Heart right ventricle (tissue), 16 donors: ENCODE measurements at regions of chr2 and their contacts with region 1.

Region 1: DNA sequence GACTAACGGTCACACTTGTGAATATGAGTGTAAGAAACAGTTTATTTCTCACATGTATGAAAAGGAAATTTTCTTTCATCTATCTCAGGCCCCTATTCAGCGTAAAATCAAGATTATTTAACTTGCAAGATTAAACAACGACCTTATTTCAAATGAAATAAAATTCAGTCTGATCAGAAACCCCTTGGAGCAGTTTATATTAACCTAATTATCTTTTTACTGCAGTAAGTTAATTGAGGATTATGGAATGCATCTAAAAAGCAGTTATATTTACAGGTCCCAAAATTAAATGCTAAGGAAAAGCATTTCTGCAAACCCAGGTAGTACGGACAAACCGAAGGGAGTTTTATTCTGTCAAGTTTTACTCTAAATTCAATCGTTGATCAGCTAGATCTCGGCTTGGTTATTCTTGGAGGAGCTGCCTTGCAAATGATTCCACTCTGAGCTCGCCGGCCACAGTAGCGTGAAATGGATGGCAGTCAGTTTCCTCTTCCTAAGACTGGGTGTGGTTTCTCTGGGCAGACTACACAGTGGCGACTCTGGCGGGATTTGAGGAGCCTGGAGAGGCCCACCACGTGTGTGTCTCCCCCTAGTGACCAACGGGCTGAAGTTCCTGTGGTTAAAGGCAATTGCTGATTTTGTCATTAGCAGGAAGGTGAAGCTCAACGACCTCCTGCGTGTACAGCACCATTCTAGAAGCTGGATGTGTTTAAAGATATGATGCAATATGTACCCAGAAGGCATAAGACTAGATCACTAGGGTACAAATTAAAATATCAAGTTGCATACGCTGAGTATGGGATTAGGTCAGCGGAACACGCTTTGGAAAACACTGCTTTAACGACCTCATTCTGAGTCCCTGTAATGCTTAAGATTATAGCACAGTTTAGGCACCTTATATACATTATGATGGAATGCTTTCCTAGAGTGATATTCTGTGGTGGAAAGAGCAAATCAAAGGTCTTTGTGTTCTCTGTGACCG is 36.4 kb downstream of the PRKRA start:
- DNase-seq: peak; percentile 82 to 93
- ATAC-seq: peak; percentile 95 to 98 (median 96)
- H3K4me3 ChIP-seq: peak overlapping the region; percentile 32 to 83 (median 69)
- H3K27ac ChIP-seq: peak overlapping the region; percentile 77 to 98 (median 93)
- H3K4me1 ChIP-seq: peaks cover 0 to 23% (median 9%) of the 10 kb centered on the region in 9 donors
- H3K27me3 ChIP-seq: no peaks in the 10 kb centered on the region
- CTCF ChIP-seq: peak; percentile 83 to 95 (median 91)

Region 2: GRCh38 chr2:178128836-178129630 is 285.5 kb before region 1 on chr2:
- intact Hi-C with region 1: loop called in 2 of 10 experiments (anchors 5 kb)
- DNase-seq: no peak
- ATAC-seq: no peak
- H3K4me3 ChIP-seq: no peak overlapping the region
- H3K27ac ChIP-seq: no peak overlapping the region
- H3K4me1 ChIP-seq: no peaks in the 10 kb centered on the region
- H3K27me3 ChIP-seq: no peaks in the 10 kb centered on the region
- CTCF ChIP-seq: no peak

Region 3: DNA sequence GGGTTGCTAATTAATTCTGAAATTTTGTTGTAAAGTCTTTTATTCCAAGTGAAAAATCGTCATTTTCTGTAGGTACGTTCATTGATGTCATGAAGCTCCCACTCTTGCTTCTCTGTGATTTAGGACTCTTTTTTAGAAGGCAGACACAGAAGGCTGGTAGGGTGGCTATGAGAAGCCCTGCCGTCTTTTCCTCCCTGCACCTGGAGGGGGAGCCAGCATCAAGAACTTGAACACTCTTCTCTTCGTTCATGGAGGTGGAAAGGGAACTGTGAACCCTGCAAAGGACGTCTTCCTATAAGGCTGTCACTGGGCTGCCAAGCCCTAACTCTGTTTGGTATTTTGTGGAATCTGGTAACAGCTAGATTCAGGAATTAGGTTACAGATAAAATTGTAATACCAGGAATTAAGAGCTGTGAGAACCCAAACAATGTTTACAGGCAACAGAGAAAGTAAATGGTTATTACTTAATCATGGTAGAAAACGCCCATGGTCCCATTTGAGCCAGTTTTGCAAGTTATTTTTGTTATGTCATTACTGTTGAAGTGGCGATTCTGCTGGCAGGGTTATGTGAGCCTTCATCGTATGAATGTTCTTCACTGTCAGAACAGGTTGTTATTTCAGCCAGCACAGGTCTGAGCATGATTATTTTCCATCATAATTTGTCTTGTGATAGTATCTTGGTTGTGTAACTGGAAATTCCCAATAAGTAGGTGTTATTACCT is 108.0 kb before region 1 on chr2:
- intact Hi-C with region 1: loop called in 2 of 10 experiments (anchors 10 kb)
- DNase-seq: peak in 1 of 2 donors; percentile 19
- ATAC-seq: peak in 4 of 8 donors; percentile 58 to 71 (median 66)
- H3K4me3 ChIP-seq: no peak overlapping the region
- H3K27ac ChIP-seq: no peak overlapping the region
- H3K4me1 ChIP-seq: peaks cover 0 to 8% (median 0%) of the 10 kb centered on the region in 9 donors
- H3K27me3 ChIP-seq: no peaks in the 10 kb centered on the region
- CTCF ChIP-seq: peak in 8 of 9 donors; percentile 8 to 57 (median 47)

Region 4: DNA sequence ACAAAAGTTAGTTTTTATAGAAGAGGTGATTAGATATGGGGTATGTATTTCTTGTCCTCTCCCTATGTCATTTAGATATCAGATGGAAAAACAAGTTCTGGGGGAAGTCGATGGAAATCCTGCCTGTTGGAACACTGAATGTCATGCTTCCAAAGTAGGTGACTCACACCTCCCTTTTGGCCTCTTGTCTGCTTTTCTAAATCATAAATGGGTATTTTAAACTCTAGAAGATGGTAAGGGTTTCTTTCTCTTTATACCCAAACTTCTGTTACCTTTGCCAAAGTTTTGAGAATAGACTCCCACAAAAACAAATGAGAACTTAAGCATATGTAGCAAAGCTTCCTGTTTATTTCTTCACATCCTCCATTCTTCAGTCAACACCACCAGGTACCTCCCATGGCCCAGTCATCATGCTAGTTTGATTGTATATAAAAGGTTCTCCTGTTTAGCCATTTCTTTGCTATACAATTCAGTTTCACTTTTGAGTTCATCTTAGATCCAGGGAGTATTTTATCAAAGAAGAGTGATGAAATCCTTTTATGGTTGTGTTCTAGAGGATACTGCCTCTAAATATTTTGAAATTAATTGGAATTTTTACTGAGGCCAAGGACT is 27.5 kb before region 1 on chr2:
- intact Hi-C with region 1: no loop called
- DNase-seq: no peak
- ATAC-seq: no peak
- H3K4me3 ChIP-seq: no peak overlapping the region
- H3K27ac ChIP-seq: no peak overlapping the region
- H3K4me1 ChIP-seq: no peaks in the 10 kb centered on the region
- H3K27me3 ChIP-seq: no peaks in the 10 kb centered on the region
- CTCF ChIP-seq: no peak

Region 5: GRCh38 chr2:178397002-178397605 is 17.5 kb before region 1 on chr2:
- intact Hi-C with region 1: loop called in 2 of 10 experiments (anchors 1 to 2 kb)
- DNase-seq: peak in 1 of 2 donors; percentile 11
- ATAC-seq: peak in 5 of 8 donors; percentile 50 to 79 (median 73)
- H3K4me3 ChIP-seq: no peak overlapping the region
- H3K27ac ChIP-seq: no peak overlapping the region
- H3K4me1 ChIP-seq: peaks cover 0 to 4% (median 0%) of the 10 kb centered on the region in 9 donors
- H3K27me3 ChIP-seq: no peaks in the 10 kb centered on the region
- CTCF ChIP-seq: peak; percentile 31 to 82 (median 72)